Mammary epithelial cell (primary cell): ENCODE measurements at regions of chr4 and their contacts with region 1.

Region 1: DNA sequence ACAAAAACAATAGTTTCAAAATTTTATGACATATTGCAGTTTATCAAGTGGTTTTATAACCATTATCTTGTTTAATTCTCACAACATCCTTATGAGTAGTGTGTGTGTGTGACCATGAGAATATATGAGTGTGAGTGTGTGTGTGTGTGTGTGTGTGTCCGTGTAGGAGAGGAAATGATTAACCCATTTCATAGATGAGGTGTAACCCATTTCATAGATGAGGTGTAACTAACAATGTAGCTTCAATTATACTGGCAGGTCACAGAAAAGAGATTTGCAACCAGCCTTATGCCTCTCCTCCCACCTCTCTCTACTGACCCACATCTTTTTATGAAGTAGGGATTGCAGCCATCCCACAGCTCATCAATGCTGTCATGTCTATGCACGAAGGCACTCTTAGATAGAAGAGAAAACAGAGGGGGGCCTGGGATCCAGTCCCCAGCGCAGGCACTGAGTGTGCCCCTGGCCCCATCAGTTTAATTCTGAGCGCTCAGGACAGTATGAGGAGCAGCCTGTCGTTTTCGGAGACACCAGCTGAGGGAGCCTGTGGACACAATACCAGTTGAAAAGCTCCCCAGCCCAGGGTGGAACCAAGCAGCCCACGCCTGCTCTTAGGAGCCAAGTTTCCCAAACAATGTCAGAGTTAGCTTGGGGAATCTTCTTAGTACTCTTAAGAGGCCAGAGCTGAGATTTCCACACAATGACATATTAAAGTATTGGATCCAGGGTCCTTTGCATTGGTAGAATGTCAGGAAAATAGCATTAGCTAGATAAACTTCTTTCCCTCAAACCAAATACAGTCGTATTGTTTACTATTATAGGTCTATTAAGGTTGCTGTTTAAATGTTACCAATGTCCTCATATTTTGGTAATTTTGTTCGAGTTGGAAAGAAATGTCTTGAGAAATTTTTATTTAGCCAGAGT is 88.6 kb downstream of the PALLD start:
- DNase-seq: peak; percentile 83
- H3K4me3 ChIP-seq: no peak overlapping the region
- H3K27ac ChIP-seq: peak overlapping the region; percentile 99
- H3K4me1 ChIP-seq: peaks cover 66% of the 10 kb centered on the region
- H3K27me3 ChIP-seq: no peaks in the 10 kb centered on the region
- CTCF ChIP-seq: peak; percentile 73 to 87

Region 2: DNA sequence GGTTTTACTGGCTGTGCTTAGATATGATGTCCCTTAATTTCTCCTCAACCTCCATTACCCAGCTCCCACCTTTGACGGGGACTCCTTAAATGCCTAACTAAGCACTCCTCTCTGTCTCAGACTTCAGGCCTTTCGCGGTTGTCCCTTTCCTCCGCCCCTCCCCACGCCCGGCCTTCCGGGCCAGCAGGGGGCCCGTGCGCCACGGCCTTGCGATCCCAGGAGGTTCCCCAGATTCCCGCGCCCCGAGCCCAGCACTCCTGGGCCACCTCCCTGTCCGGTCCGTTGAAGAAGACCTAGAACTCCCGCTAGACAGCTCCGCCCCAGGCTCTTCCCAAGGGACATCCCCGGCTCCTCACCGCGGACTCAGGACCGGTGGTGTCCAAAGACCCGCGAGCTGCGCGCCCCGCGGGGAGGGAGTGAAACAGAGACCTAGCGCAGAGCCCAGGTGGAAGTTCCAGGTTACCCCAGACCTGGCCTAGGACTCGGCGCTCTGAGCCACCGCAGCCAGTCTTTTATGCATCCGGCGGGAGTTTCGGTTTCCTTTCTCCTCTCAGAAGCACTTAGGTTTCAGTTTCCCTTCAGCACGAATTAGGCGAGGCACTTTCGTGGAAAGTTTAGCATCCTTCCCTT is 267.0 kb before region 1 on chr4 and contains the start of gene DDX60:
- CTCF ChIA-PET with region 1: no interaction called
- dilution Hi-C with region 1: no loop called
- in situ Hi-C with region 1: no loop called
- intact Hi-C with region 1: loop called (anchors 5 kb)
- DNase-seq: peak; percentile 91
- H3K4me3 ChIP-seq: peak within 1 kb of the TSS; percentile 57 to 84 (median 70)
- H3K27ac ChIP-seq: peak within 1 kb of the TSS; percentile 91
- H3K4me1 ChIP-seq: peaks cover 17% of the 10 kb centered on the region
- H3K27me3 ChIP-seq: no peaks in the 10 kb centered on the region
- CTCF ChIP-seq: peak; percentile 29 to 68
- total RNA-seq, gene DDX60: 5.5 to 7.1 TPM

Region 3: GRCh38 chr4:168527560-168527959 is 57.9 kb before region 1 on chr4:
- CTCF ChIA-PET with region 1: no interaction called
- dilution Hi-C with region 1: no loop called
- in situ Hi-C with region 1: no loop called
- intact Hi-C with region 1: loop called (anchors 2 kb)
- DNase-seq: no peak
- H3K4me3 ChIP-seq: no peak overlapping the region
- H3K27ac ChIP-seq: no peak overlapping the region
- H3K4me1 ChIP-seq: peaks cover 22% of the 10 kb centered on the region
- H3K27me3 ChIP-seq: no peaks in the 10 kb centered on the region
- CTCF ChIP-seq: no peak

Region 4: DNA sequence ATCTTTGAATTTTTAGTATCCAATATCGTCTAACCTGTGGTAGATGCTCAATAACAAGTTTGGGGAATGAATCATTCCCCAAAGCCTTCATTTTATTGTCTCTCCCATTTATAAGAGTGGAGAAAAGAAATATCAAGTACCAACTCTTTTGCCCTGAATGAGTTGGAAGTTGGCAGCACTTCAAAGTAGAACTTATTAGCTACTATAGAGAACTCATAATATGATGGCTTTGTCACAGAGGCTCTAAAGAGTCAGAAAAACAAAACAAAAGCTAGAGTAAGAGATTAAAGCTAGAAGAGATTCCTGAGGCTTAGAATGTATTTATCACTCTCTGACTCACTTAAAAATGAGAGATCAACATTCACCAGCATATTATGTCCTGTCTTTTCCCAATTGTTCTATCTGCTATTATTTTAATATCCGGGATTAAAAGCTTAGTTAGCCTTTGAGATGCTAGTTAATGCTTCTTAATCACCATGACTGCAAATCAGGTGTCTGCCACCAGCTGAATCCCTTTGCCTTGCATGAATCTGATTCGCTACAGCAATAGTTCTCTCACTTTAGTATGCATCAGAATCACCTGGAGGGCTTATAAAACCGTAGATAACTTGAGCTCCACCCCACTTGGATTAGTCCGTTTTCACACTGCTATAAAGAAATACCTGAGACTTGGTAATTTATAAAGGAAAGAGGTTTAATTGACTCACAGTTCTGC is 10.7 kb before region 1 on chr4:
- CTCF ChIA-PET with region 1: no interaction called
- dilution Hi-C with region 1: no loop called
- in situ Hi-C with region 1: no loop called
- intact Hi-C with region 1: no loop called
- DNase-seq: peak; percentile 71
- H3K4me3 ChIP-seq: no peak overlapping the region
- H3K27ac ChIP-seq: no peak overlapping the region
- H3K4me1 ChIP-seq: peaks cover 23% of the 10 kb centered on the region
- H3K27me3 ChIP-seq: no peaks in the 10 kb centered on the region
- CTCF ChIP-seq: no peak

Region 5: DNA sequence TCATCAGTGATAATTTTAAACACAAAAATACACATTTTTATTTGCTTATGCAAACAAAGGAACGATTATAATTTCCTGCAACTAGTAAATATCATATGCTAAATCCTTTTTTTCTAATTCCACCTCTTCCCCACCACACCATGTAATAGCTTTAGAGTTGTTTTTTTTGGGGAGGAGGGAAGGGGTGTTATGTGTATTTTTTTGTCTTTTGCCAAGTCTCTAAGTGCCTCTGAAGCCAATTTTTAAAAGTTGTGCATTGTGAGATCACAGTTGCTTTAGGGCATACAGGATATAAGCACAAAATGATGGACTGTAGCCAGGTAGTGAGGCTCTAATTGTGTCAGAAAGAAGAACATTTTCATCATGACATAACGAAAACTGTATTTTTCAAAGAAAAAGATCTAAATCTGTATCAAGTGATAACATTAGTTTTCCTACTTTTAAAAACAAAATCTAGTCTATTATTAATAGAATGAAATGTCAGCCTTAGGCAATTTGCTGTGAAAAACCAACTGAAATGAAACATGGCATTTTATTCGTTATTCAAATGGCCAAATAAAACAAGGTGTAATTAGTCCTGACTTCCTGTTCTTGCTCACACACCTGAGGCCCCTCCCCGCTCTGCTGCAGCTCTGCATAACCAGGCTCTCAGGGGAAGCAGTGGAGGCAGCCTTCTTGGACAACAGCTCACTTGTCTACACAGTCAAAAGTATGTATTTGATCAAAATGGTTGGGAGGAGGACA is 68.8 kb after region 1 on chr4:
- CTCF ChIA-PET with region 1: no interaction called
- dilution Hi-C with region 1: no loop called
- in situ Hi-C with region 1: no loop called
- intact Hi-C with region 1: loop called (anchors 2 kb)
- DNase-seq: peak; percentile 66
- H3K4me3 ChIP-seq: peak overlapping the region; percentile 11 to 52 (median 49)
- H3K27ac ChIP-seq: peak overlapping the region; percentile 78
- H3K4me1 ChIP-seq: peaks cover 32% of the 10 kb centered on the region
- H3K27me3 ChIP-seq: no peaks in the 10 kb centered on the region
- CTCF ChIP-seq: no peak

Region 6: GRCh38 chr4:168831919-168832762 is 246.7 kb after region 1 on chr4:
- CTCF ChIA-PET with region 1: no interaction called
- dilution Hi-C with region 1: no loop called
- in situ Hi-C with region 1: loop called in 1 of 2 experiments (anchors 25 kb)
- intact Hi-C with region 1: loop called (anchors 2 kb)
- DNase-seq: peak; percentile 86
- H3K4me3 ChIP-seq: peak overlapping the region; percentile 88 to 95 (median 95)
- H3K27ac ChIP-seq: peak overlapping the region; percentile 84
- H3K4me1 ChIP-seq: peaks cover 37% of the 10 kb centered on the region
- H3K27me3 ChIP-seq: no peaks in the 10 kb centered on the region
- CTCF ChIP-seq: no peak

Region 7: GRCh38 chr4:168917138-168917779 is 331.8 kb after region 1 on chr4:
- CTCF ChIA-PET with region 1: interaction called, 3 read pairs
- dilution Hi-C with region 1: no loop called
- in situ Hi-C with region 1: no loop called
- intact Hi-C with region 1: loop called (anchors 1 kb)
- DNase-seq: no peak
- H3K4me3 ChIP-seq: no peak overlapping the region
- H3K27ac ChIP-seq: no peak overlapping the region
- H3K4me1 ChIP-seq: no peaks in the 10 kb centered on the region
- H3K27me3 ChIP-seq: no peaks in the 10 kb centered on the region
- CTCF ChIP-seq: peak; percentile 41 to 44